Activated naive CD4-positive, alpha-beta T cell treated with anti-CD3 and anti-CD28 coated beads for 36 hours (primary cell): ENCODE measurements at regions of chr3 and their contacts with region 1.

Region 1: GRCh38 chr3:106609666-106610301 is 741.0 kb upstream of the CBLB start:
- DNase-seq: peak; percentile 82
- H3K4me3 Mint-ChIP-seq: no peak overlapping the region
- H3K27ac Mint-ChIP-seq: no peak overlapping the region
- H3K4me1 Mint-ChIP-seq: peaks cover 21% of the 10 kb centered on the region
- H3K27me3 Mint-ChIP-seq: no peaks in the 10 kb centered on the region

Region 2: GRCh38 chr3:105518806-105519418 is 1090.9 kb before region 1 on chr3:
- CTCF ChIA-PET with region 1: no interaction called
- intact Hi-C with region 1: loop called (anchors 1 kb)
- DNase-seq: peak; percentile 30
- H3K4me3 Mint-ChIP-seq: no peak overlapping the region
- H3K27ac Mint-ChIP-seq: no peak overlapping the region
- H3K4me1 Mint-ChIP-seq: no peaks in the 10 kb centered on the region
- H3K27me3 Mint-ChIP-seq: no peaks in the 10 kb centered on the region

Region 3: DNA sequence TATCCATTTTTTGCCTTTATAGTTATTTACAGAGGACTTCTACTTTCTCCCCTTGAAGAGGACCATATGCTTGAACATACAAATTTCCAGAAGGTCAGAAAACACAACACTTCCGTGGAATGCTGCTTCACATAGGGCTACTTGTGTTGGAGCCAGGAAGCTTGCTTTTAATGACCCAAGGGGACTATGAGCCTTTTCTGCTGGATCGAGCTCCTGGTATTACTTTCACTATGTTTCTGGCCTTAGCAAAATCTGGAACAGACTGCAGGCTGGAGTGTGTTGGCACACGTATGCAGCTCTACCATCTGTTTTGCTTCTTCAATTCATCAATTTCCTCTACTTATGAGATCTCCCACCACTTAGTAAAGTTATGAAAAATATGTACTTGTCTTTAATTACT is 671.7 kb before region 1 on chr3:
- CTCF ChIA-PET with region 1: no interaction called
- intact Hi-C with region 1: loop called (anchors 10 kb)
- DNase-seq: no peak
- H3K4me3 Mint-ChIP-seq: no peak overlapping the region
- H3K27ac Mint-ChIP-seq: no peak overlapping the region
- H3K4me1 Mint-ChIP-seq: peaks cover 2% of the 10 kb centered on the region
- H3K27me3 Mint-ChIP-seq: no peaks in the 10 kb centered on the region

Region 4: DNA sequence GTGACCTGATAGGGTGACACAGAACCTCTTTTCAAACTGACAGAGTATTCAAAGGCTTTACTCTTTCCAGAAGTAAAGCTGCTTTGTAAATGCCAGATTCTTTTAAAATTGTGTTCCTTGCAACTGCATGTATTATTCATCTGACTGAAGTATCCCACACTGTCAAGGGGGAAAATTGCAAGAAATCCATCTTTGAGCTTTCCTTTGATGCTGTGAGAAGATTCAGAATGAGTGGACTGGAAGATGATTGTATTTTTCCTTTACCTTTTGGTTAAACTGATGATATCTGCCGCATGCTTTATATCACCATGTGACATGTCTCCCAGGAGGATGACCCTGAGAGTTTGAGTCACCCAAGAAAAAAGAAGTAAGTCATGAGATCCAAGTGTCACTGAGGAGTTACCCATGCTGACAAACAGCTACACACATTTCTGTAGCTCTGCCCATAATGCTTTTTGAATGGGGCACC is 490.1 kb before region 1 on chr3:
- CTCF ChIA-PET with region 1: no interaction called
- intact Hi-C with region 1: loop called (anchors 5 kb)
- DNase-seq: peak; percentile 57
- H3K4me3 Mint-ChIP-seq: no peak overlapping the region
- H3K27ac Mint-ChIP-seq: peak overlapping the region; percentile 73
- H3K4me1 Mint-ChIP-seq: peaks cover 28% of the 10 kb centered on the region
- H3K27me3 Mint-ChIP-seq: no peaks in the 10 kb centered on the region

Region 5: GRCh38 chr3:106232956-106233355 is 376.8 kb before region 1 on chr3:
- CTCF ChIA-PET with region 1: interaction called, 4 read pairs
- intact Hi-C with region 1: loop called (anchors 5 kb)
- DNase-seq: no peak
- H3K4me3 Mint-ChIP-seq: no peak overlapping the region
- H3K27ac Mint-ChIP-seq: peak overlapping the region; percentile 86
- H3K4me1 Mint-ChIP-seq: peaks cover 56% of the 10 kb centered on the region
- H3K27me3 Mint-ChIP-seq: no peaks in the 10 kb centered on the region

Region 6: GRCh38 chr3:107064445-107065060 is 454.8 kb after region 1 on chr3:
- CTCF ChIA-PET with region 1: no interaction called
- intact Hi-C with region 1: loop called (anchors 2 kb)
- DNase-seq: peak; percentile 85
- H3K4me3 Mint-ChIP-seq: no peak overlapping the region
- H3K27ac Mint-ChIP-seq: no peak overlapping the region
- H3K4me1 Mint-ChIP-seq: peaks cover 14% of the 10 kb centered on the region
- H3K27me3 Mint-ChIP-seq: peaks cover 7% of the 10 kb centered on the region

Region 7: DNA sequence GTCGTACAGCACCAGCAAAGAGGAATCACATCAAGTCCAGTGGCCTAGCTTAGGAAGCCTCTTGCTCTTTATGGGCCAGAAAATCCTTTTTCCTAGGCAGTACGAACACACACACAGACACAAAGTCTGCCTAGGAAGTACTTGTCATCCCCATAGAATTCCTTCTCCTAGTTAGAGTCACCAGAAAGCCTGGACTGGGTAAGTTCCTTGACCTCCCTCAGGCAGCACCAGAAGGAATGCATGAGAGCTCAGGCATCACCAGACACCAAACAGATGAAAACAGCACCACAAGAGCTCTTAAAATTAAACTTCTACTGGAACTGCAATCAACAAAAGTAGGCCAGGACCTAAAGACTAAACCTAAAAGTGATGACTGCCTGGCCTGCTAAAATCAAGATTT is 574.6 kb after region 1 on chr3:
- CTCF ChIA-PET with region 1: no interaction called
- intact Hi-C with region 1: no loop called
- DNase-seq: no peak
- H3K4me3 Mint-ChIP-seq: no peak overlapping the region
- H3K27ac Mint-ChIP-seq: no peak overlapping the region
- H3K4me1 Mint-ChIP-seq: no peaks in the 10 kb centered on the region
- H3K27me3 Mint-ChIP-seq: peaks cover 5% of the 10 kb centered on the region